Right lobe of liver (tissue), 6 donors: ENCODE measurements at regions of chr10 and their contacts with region 1.

Region 1: DNA sequence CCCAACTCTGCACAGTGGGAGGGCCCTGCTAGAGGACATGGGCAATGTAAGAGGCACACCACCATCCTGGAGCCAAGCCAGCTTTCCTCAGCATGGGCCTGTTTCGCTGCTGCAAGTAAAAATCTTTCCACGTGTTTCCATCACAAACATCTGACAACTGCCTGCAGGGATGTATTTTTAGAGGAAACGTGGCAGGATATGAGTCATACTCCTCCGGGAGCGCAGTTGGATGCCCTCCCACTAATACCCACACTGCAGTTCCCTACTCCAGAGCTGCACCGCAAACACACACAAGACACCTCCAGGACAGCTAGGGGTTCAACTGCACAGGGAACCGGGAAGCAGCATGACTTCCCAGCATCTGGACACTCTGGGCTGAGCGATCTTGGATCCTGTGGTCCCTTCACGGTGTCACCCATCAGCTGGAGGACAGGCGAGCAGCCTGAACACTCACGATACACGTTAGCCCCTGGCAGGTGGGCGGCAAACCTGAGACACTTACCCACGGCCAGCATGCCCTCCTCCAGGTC is 26.1 kb downstream of the PLAC9 start:
- DNase-seq: peak in 1 of 3 donors; percentile 57
- ATAC-seq: peak; percentile 75 to 81 (median 78)
- H3K4me3 ChIP-seq: no peak overlapping the region
- H3K27ac ChIP-seq: peak overlapping the region in 2 of 3 donors; percentile 33 to 51
- H3K4me1 ChIP-seq: no peaks in the 10 kb centered on the region
- H3K27me3 ChIP-seq: no peaks in the 10 kb centered on the region
- CTCF ChIP-seq: no peak
- POLR2A ChIP-seq: no peak

Region 2: DNA sequence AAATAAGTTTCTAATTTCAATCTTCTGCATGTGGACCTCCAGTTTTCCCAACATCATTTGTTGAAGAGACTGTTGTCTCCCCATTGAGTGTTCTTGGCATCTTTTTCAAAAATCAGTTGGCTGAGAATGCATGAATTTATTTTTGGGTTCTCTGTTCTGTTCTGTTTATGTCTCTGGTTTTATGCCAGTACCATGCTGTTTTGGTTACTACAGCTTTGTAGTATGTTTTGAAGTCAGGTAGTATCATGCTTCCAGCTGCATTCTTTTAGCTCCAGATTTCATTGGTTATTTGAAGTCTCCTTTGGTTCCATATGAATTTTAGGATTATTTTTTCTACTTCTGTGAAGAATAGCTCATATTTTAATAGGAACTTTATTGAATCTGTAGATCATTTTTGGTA is 188.6 kb before region 1 on chr10:
- intact Hi-C with region 1: no loop called
- DNase-seq: no peak
- ATAC-seq: no peak
- H3K4me3 ChIP-seq: no peak overlapping the region
- H3K27ac ChIP-seq: no peak overlapping the region
- H3K4me1 ChIP-seq: no peaks in the 10 kb centered on the region
- H3K27me3 ChIP-seq: no peaks in the 10 kb centered on the region
- CTCF ChIP-seq: no peak
- POLR2A ChIP-seq: no peak

Region 3: DNA sequence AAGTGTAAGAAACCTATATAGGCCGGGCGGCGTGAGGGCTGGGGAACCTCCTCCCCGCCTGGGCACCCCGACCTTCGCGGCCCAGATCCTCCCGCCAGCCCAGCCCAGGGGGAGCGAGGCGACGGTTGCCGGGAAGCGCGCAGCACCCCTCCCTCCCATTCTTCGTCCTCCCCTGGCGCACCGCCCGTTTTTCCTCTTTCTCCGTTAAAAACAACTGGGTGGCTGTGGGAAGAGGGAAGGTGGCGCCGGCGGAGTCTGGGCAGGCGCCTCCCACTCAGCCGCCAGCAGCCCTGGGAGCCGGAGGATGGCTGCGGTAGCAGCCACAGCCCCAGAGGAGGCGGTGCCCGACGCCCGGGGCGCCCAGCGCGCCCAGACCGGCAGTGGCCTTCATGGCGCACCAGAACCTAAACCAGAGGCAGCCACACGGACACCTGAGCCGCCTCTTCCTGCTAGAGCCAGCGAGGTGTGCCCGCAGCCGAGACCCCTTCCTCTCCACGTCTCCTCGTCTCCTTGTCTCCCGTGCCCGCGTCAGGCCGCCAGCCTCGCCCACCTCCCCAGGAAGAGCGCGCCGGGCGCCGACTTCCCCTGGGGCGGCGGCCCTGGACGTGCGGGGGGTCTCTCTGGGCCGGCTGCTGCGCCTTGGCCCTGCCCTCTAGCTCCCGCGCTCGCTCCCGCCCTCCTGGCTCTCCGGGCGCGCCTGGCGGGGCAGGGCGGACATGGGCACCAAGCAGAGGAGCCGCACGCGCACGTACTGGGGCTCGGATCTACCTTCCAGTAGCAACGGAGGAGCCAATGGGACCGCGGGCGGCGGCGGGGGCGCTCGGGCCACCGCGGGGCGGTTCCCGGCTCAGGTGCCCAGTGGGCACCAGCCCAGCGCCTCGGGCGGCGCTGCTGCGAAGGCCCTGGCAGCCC is 177.0 kb before region 1 on chr10:
- intact Hi-C with region 1: no loop called
- DNase-seq: peak; percentile 74 to 82 (median 77)
- ATAC-seq: peak; percentile 92 to 96 (median 94)
- H3K4me3 ChIP-seq: peak overlapping the region; percentile 68 to 77 (median 69)
- H3K27ac ChIP-seq: peak overlapping the region; percentile 19 to 49 (median 33)
- H3K4me1 ChIP-seq: peaks cover 0 to 11% (median 0%) of the 10 kb centered on the region in 4 donors
- H3K27me3 ChIP-seq: no peaks in the 10 kb centered on the region
- CTCF ChIP-seq: peak in 3 of 4 donors; percentile 8 to 27 (median 13)
- POLR2A ChIP-seq: no peak

Region 4: GRCh38 chr10:80205478-80206276 is 47.0 kb after region 1 on chr10 and contains the start of gene ANXA11:
- intact Hi-C with region 1: loop called in 1 of 2 experiments (anchors 10 kb)
- DNase-seq: peak; percentile 89 to 91 (median 90)
- ATAC-seq: peak; percentile 74 to 87 (median 84)
- H3K4me3 ChIP-seq: peak within 1 kb of the TSS; percentile 84 to 93 (median 89)
- H3K27ac ChIP-seq: peak within 1 kb of the TSS; percentile 91 to 99 (median 98)
- H3K4me1 ChIP-seq: peaks cover 0 to 41% (median 19%) of the 10 kb centered on the region in 4 donors
- H3K27me3 ChIP-seq: no peaks in the 10 kb centered on the region
- CTCF ChIP-seq: no peak
- POLR2A ChIP-seq: peak; percentile 99
- total RNA-seq, gene ANXA11: 41.7 to 100 (median 55.6) TPM